B cell (primary cell): ENCODE measurements at regions of chr11 and their contacts with region 1.

Region 1: GRCh38 chr11:75445315-75445953 is 12.4 kb upstream of the KLHL35 start:
- DNase-seq: peak; percentile 77
- ATAC-seq: peak; percentile 88
- H3K4me3 ChIP-seq: no peak overlapping the region
- H3K4me3 Mint-ChIP-seq: no peak overlapping the region
- H3K27ac ChIP-seq: no peak overlapping the region
- H3K27ac Mint-ChIP-seq: no peak overlapping the region
- H3K4me1 ChIP-seq: no peaks in the 10 kb centered on the region
- H3K4me1 Mint-ChIP-seq: no peaks in the 10 kb centered on the region
- H3K27me3 ChIP-seq: peaks cover 0 to 3% (median 0%) of the 10 kb centered on the region in 4 experiments
- H3K27me3 Mint-ChIP-seq: peaks cover 3% of the 10 kb centered on the region
- CTCF ChIP-seq: peak; percentile 99

Region 2: DNA sequence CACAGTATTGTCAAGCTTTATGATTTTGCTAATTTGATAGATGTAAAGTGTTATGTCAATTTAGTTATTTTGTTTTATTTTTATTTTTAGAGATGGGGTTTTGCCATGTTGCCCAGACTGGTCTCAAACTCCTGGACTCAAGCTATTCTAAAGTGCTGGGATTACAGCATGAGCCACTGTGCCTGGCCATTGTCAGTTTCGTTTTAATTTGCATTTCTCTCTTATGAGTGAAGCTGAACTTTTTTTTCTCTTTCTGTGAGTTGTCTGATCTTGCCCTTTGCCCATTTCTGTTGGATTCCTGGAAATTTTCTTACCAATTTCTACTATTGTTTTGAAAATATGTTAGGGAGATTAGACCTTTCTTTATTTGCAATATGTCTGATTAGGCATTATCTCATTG is 441.2 kb before region 1 on chr11:
- CTCF ChIA-PET with region 1: no interaction called
- POLR2A ChIA-PET with region 1: no interaction called
- intact Hi-C with region 1: no loop called
- DNase-seq: no peak
- ATAC-seq: no peak
- H3K4me3 ChIP-seq: no peak overlapping the region
- H3K4me3 Mint-ChIP-seq: no peak overlapping the region
- H3K27ac ChIP-seq: no peak overlapping the region
- H3K27ac Mint-ChIP-seq: no peak overlapping the region
- H3K4me1 ChIP-seq: no peaks in the 10 kb centered on the region
- H3K4me1 Mint-ChIP-seq: peaks cover 14% of the 10 kb centered on the region
- H3K27me3 ChIP-seq: no peaks in the 10 kb centered on the region
- H3K27me3 Mint-ChIP-seq: no peaks in the 10 kb centered on the region
- CTCF ChIP-seq: no peak

Region 3: DNA sequence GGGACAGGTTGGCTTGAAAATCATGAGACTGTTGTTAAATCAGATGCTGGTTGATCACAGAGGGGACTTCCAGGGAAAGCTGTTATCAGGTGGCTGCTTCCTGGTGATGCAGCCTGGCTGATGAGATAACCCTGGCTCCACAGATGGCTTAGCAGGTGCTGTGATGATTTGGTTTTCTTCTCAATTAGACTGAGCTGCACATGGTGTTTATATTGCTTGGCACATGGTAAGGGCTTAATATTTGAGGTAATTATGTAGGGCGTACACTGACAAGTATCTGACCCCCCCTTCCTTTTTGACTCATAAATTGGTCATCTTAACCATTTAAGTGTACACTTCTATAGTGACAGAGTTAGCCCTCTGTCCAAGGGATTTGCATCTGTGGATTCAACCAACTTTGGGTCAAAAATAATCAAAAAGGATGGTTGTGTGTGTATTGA is 39.1 kb before region 1 on chr11:
- CTCF ChIA-PET with region 1: interaction called, 10 read pairs
- POLR2A ChIA-PET with region 1: no interaction called
- intact Hi-C with region 1: no loop called
- DNase-seq: no peak
- ATAC-seq: no peak
- H3K4me3 ChIP-seq: no peak overlapping the region
- H3K4me3 Mint-ChIP-seq: no peak overlapping the region
- H3K27ac ChIP-seq: peak overlapping the region in 1 of 2 donors; percentile 55
- H3K27ac Mint-ChIP-seq: no peak overlapping the region
- H3K4me1 ChIP-seq: peaks cover 10 to 11% of the 10 kb centered on the region in 2 donors
- H3K4me1 Mint-ChIP-seq: peaks cover 30% of the 10 kb centered on the region
- H3K27me3 ChIP-seq: no peaks in the 10 kb centered on the region
- H3K27me3 Mint-ChIP-seq: no peaks in the 10 kb centered on the region
- CTCF ChIP-seq: no peak

Region 4: DNA sequence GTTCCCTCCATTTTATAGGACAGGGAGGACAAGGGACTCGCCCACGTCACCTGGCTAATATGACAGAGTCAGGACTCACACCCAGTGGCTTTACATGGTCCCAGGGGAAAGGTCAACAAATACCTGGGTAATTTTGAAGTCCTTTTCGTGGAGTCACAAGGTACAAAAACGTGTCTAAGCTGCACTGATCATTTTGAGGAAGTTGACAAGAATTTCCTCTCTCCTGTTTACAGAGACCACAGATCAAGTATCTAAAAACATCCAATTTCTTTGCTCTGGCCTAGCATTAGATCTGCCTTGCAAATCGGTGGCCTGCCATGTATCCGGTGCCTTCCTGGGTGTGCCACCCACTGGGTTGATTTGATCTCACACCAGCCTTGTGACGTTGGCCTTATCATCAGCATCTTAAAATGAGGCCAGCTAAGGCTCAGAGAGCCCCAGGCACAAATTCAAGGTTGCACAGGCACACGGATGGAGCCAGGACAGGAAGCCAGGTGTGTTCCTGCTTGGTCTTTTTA is 62.7 kb after region 1 on chr11:
- CTCF ChIA-PET with region 1: interaction called, 11 read pairs
- POLR2A ChIA-PET with region 1: no interaction called
- intact Hi-C with region 1: no loop called
- DNase-seq: peak; percentile 82
- ATAC-seq: peak; percentile 86
- H3K4me3 ChIP-seq: peak overlapping the region in 2 of 5 experiments; percentile 0 to 13
- H3K4me3 Mint-ChIP-seq: peak overlapping the region; percentile 81
- H3K27ac ChIP-seq: peak overlapping the region; percentile 68 to 82
- H3K27ac Mint-ChIP-seq: peak overlapping the region; percentile 97
- H3K4me1 ChIP-seq: peaks cover 25 to 49% of the 10 kb centered on the region in 2 donors
- H3K4me1 Mint-ChIP-seq: peaks cover 58% of the 10 kb centered on the region
- H3K27me3 ChIP-seq: no peaks in the 10 kb centered on the region
- H3K27me3 Mint-ChIP-seq: no peaks in the 10 kb centered on the region
- CTCF ChIP-seq: no peak

Region 5: DNA sequence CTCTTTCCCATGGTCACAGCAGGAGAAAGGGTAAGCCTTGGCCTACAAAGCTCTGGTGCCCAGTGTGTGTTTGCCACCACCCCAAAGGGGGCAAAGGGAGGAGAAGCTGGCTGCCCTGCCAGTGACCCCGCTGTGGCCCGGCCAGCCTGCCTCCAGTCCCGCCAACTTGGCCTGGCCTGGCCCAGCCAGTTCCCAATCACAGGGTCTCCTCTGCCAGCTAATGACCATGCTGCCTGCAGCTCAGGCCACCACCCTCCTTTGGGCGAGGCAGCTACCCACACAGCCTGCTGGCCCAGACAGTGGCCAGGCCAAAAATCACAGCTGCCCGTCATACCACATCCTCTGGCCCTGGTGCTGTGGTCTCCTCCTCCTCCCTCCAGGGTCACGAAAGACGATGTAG is 75.3 kb after region 1 on chr11:
- CTCF ChIA-PET with region 1: interaction called, 34 read pairs
- POLR2A ChIA-PET with region 1: no interaction called
- intact Hi-C with region 1: no loop called
- DNase-seq: no peak
- ATAC-seq: no peak
- H3K4me3 ChIP-seq: no peak overlapping the region
- H3K4me3 Mint-ChIP-seq: no peak overlapping the region
- H3K27ac ChIP-seq: no peak overlapping the region
- H3K27ac Mint-ChIP-seq: peak overlapping the region; percentile 59
- H3K4me1 ChIP-seq: peaks cover 53 to 62% of the 10 kb centered on the region in 2 donors
- H3K4me1 Mint-ChIP-seq: peaks cover 64% of the 10 kb centered on the region
- H3K27me3 ChIP-seq: peaks cover 0 to 25% (median 9%) of the 10 kb centered on the region in 4 experiments
- H3K27me3 Mint-ChIP-seq: no peaks in the 10 kb centered on the region
- CTCF ChIP-seq: no peak

Region 6: DNA sequence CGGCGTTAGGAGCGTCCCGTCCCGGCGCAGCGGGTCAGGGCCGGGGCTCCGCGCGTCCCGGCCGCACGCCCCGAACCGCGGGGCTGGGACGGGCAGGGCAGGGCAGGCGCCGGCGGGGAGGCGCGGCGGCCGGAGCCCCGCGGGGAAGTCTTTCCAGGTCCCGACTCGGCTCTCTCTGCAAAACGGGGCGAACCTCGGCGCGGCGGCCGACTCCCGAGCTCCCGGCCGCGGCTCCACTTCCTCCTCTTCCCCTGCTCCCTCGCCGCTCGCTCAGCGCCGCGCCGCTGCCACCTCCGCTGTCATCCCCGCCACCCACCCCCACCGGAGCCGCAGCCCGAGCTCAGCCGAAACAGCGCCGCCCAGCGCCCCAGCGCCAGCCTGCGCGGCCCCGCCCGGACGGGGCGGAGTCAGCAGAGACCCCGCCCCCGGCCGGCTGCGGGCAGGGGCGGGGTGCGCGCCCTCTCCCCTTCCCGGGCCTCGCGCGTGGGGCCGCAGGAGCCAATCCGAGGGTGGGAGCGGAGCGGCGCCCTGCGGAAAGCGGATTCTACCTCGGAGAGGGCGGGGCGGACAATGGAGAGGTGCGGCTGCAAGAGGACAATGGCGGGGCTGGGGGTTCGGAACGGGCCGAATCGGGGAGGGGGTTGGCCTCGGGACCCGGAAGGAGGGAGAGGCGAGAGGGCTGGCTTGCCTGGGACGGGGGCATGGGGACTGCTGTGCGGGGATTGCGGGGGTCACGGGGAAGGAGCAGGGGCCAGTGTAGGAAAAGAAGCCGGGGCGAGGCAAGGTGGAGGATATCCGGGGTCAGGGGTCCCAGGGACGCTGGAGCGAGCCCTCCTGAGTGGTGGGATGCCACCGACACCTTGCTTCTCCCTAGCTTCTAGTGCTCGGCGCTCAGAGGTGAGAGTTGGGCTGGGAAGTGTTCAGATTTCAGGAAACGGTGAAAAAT is 80.4 kb after region 1 on chr11 and contains the start of gene GDPD5:
- CTCF ChIA-PET with region 1: interaction called, 284 read pairs
- POLR2A ChIA-PET with region 1: interaction called, 7 read pairs
- intact Hi-C with region 1: no loop called
- DNase-seq: peak; percentile 91
- ATAC-seq: peak; percentile 95
- H3K4me3 ChIP-seq: peak within 1 kb of the TSS in 4 of 5 experiments; percentile 59 to 74 (median 70)
- H3K4me3 Mint-ChIP-seq: peak within 1 kb of the TSS; percentile 96
- H3K27ac ChIP-seq: no peak within 1 kb of the TSS
- H3K27ac Mint-ChIP-seq: peak within 1 kb of the TSS; percentile 83
- H3K4me1 ChIP-seq: peaks cover 25 to 33% of the 10 kb centered on the region in 2 donors
- H3K4me1 Mint-ChIP-seq: peaks cover 36% of the 10 kb centered on the region
- H3K27me3 ChIP-seq: peaks cover 0 to 31% (median 10%) of the 10 kb centered on the region in 4 experiments
- H3K27me3 Mint-ChIP-seq: peaks cover 4% of the 10 kb centered on the region
- CTCF ChIP-seq: peak; percentile 61
- total RNA-seq, gene GDPD5: 99.6 and 102 TPM in 2 replicates

Region 7: GRCh38 chr11:75532200-75533048 is 87.0 kb after region 1 on chr11:
- CTCF ChIA-PET with region 1: interaction called, 284 read pairs
- POLR2A ChIA-PET with region 1: interaction called, 7 read pairs
- intact Hi-C with region 1: no loop called
- DNase-seq: peak; percentile 84
- ATAC-seq: peak; percentile 72
- H3K4me3 ChIP-seq: no peak overlapping the region
- H3K4me3 Mint-ChIP-seq: no peak overlapping the region
- H3K27ac ChIP-seq: no peak overlapping the region
- H3K27ac Mint-ChIP-seq: peak overlapping the region; percentile 0
- H3K4me1 ChIP-seq: peaks cover 12 to 24% of the 10 kb centered on the region in 2 donors
- H3K4me1 Mint-ChIP-seq: peaks cover 36% of the 10 kb centered on the region
- H3K27me3 ChIP-seq: peaks cover 0 to 5% (median 3%) of the 10 kb centered on the region in 4 experiments
- H3K27me3 Mint-ChIP-seq: peaks cover 15% of the 10 kb centered on the region
- CTCF ChIP-seq: peak; percentile 92